Dendritic cell treated with granulocyte-macrophage colony-stimulating factor and Interleukin-4, amounts not matched to agents 40 ng/mL and 50 ng/mL, for 4 days (primary cell): ENCODE measurements at regions of chr15 and their contacts with region 1.

Region 1: GRCh38 chr15:62691008-62691407 is 351.5 kb upstream of the TPM1 start:
- H3K4me3 Mint-ChIP-seq: no peak overlapping the region
- H3K27ac Mint-ChIP-seq: peak overlapping the region; percentile 59
- H3K4me1 Mint-ChIP-seq: peaks cover 28% of the 10 kb centered on the region
- H3K27me3 Mint-ChIP-seq: no peaks in the 10 kb centered on the region

Region 2: GRCh38 chr15:62389885-62390790 is 300.9 kb before region 1 on chr15:
- intact Hi-C with region 1: loop called (anchors 10 kb)
- H3K4me3 Mint-ChIP-seq: peak within 1 kb of the TSS; percentile 96
- H3K27ac Mint-ChIP-seq: peak within 1 kb of the TSS; percentile 94
- H3K4me1 Mint-ChIP-seq: peaks cover 26% of the 10 kb centered on the region
- H3K27me3 Mint-ChIP-seq: peaks cover 39% of the 10 kb centered on the region

Region 3: GRCh38 chr15:62858343-62858742 is 167.3 kb after region 1 on chr15:
- intact Hi-C with region 1: no loop called
- H3K4me3 Mint-ChIP-seq: no peak overlapping the region
- H3K27ac Mint-ChIP-seq: no peak overlapping the region
- H3K4me1 Mint-ChIP-seq: no peaks in the 10 kb centered on the region
- H3K27me3 Mint-ChIP-seq: peaks cover 27% of the 10 kb centered on the region